Sigmoid colon (tissue), 7 donors: ENCODE measurements at regions of chr17 and their contacts with region 1.

Region 1: DNA sequence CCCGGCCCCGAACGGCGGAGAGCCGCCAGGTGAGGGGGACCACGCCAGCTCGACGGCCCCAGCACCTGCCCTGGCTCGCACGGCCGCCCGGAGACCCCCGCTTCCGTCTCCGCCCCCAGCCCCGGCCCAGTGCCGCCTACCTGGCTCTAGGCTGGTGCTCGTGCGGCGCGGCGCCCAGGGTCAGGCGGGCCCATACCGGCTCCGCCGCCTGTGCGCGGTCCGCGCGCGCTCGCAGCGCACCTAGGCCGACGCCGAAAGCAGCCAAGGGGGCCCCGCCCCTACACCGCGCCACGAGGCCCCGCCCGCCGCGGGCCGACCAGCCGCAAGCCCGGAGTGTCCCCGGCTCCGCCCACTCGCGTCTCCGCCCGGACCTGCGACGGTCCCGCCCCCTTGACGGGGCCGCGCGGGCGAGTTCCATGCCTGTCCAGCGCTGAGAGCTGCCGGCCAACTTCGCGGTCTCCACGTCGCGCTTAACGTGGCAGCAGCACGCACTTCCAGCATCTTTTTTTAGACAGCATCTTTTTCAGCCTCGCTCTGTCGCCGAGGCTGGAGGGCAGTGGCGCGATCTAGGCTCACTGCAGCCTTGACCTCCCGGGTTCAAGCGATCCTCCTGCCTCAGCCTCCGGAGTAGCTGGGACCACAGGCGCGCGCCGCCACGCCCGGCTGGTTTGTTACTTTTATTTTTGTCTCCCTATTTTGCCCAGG is at the start of gene SLC25A39:
- DNase-seq: peak; percentile 98
- H3K4me3 ChIP-seq: peak within 1 kb of the TSS; percentile 67 to 97 (median 88)
- H3K27ac ChIP-seq: peak within 1 kb of the TSS; percentile 94 to 99 (median 97)
- H3K4me1 ChIP-seq: peaks cover 0 to 35% (median 26%) of the 10 kb centered on the region in 4 donors
- H3K27me3 ChIP-seq: no peaks in the 10 kb centered on the region
- CTCF ChIP-seq: no peak
- EP300 ChIP-seq: no peak
- POLR2A ChIP-seq: peak; percentile 34 to 50
- total RNA-seq, gene SLC25A39: 39.0 to 51.8 (median 43.3) TPM

Region 2: DNA sequence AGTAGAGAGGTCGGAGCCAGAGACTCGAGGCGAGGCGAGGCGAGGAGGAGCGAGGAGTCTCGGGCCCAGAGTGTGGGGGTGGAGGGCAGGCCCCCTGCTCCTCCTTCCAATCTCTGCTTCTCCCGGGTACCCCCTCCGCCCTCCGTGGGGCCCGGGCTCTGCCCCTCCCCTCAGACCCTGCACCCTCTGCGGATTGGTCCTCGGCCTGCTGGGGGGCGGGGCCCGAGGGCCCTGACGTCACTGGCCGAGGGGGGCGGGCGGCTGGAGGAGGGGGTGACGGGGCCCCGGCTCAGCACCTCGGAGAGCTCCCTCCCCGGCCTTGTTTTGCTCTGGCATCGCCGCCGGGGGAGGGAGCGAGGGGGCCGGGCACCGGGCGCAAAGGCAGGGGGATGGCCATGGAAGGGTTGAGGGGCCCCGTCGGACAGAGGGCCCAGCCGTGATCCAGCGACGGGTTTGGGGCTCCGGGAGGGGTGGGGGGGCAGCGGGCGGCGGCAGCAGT is 16.4 kb before region 1 on chr17 and contains the start of gene RUNDC3A:
- intact Hi-C with region 1: loop called (anchors 1 kb)
- DNase-seq: peak; percentile 91
- H3K4me3 ChIP-seq: peak within 1 kb of the TSS; percentile 17 to 55 (median 44)
- H3K27ac ChIP-seq: peak within 1 kb of the TSS; percentile 68 to 87 (median 78)
- H3K4me1 ChIP-seq: peaks cover 0 to 21% (median 19%) of the 10 kb centered on the region in 4 donors
- H3K27me3 ChIP-seq: peaks cover 0 to 10% (median 7%) of the 10 kb centered on the region in 3 donors
- CTCF ChIP-seq: no peak
- EP300 ChIP-seq: no peak
- POLR2A ChIP-seq: no peak
- total RNA-seq, gene RUNDC3A: 1.2 to 10.5 (median 6.0) TPM